ENCODE measurements at regions of chr4 and their contacts with region 1.

Region 1: GRCh38 chr4:156475322-156475721 is 496.3 kb downstream of the PDGFC start:
- DNase-seq: peak; percentile 76
- ATAC-seq: peak; percentile 32; the same call in 1 of the 2 replicates
- H3K4me3 ChIP-seq: no peak overlapping the region
- H3K27ac ChIP-seq: no peak overlapping the region
- H3K4me1 ChIP-seq: peaks cover 5% of the 10 kb centered on the region
- H3K27me3 ChIP-seq: no peaks in the 10 kb centered on the region
- CTCF ChIP-seq: peak; percentile 70
- POLR2A ChIP-seq: no peak
- RAD21 ChIP-seq: peak; percentile 90

Region 2: DNA sequence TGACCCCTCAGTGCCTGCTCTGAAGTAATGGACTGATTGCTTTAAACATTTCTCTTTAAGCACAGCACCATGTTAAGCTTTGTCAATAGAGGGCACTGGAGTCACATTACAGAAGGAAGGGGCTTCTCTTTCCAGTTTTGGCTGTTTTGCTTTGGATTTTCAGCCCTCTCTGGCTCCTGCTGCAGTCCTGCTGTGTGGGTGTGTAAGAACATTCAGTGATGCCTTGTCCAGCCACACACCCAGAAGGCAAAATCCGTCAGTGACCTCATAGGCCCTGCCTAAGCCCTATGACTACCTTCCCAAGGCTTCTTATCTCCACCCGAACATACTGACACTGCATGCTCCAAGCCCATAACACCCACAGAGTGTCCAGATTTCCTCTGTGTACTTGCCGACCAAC is 306.3 kb before region 1 on chr4:
- CTCF ChIA-PET with region 1: interaction called, 14 read pairs
- POLR2A ChIA-PET with region 1: no interaction called
- dilution Hi-C with region 1: no loop called
- in situ Hi-C with region 1: no loop called
- intact Hi-C with region 1: loop called (anchors 1 kb)
- DNase-seq: peak; percentile 95
- ATAC-seq: peak; percentile 97
- H3K4me3 ChIP-seq: no peak overlapping the region
- H3K27ac ChIP-seq: no peak overlapping the region
- H3K4me1 ChIP-seq: peaks cover 5% of the 10 kb centered on the region
- H3K27me3 ChIP-seq: no peaks in the 10 kb centered on the region
- CTCF ChIP-seq: peak; percentile 75
- POLR2A ChIP-seq: no peak
- RAD21 ChIP-seq: peak; percentile 84

Region 3: GRCh38 chr4:156638925-156639605 is 163.7 kb after region 1 on chr4:
- CTCF ChIA-PET with region 1: no interaction called
- POLR2A ChIA-PET with region 1: no interaction called
- dilution Hi-C with region 1: no loop called
- in situ Hi-C with region 1: no loop called
- intact Hi-C with region 1: loop called (anchors 2 kb)
- DNase-seq: peak; percentile 69
- ATAC-seq: peak; percentile 75
- H3K4me3 ChIP-seq: no peak overlapping the region
- H3K27ac ChIP-seq: no peak overlapping the region
- H3K4me1 ChIP-seq: peaks cover 5% of the 10 kb centered on the region; the same call in 1 of the 2 replicates
- H3K27me3 ChIP-seq: no peaks in the 10 kb centered on the region
- CTCF ChIP-seq: no peak
- POLR2A ChIP-seq: no peak
- RAD21 ChIP-seq: no peak

Region 4: DNA sequence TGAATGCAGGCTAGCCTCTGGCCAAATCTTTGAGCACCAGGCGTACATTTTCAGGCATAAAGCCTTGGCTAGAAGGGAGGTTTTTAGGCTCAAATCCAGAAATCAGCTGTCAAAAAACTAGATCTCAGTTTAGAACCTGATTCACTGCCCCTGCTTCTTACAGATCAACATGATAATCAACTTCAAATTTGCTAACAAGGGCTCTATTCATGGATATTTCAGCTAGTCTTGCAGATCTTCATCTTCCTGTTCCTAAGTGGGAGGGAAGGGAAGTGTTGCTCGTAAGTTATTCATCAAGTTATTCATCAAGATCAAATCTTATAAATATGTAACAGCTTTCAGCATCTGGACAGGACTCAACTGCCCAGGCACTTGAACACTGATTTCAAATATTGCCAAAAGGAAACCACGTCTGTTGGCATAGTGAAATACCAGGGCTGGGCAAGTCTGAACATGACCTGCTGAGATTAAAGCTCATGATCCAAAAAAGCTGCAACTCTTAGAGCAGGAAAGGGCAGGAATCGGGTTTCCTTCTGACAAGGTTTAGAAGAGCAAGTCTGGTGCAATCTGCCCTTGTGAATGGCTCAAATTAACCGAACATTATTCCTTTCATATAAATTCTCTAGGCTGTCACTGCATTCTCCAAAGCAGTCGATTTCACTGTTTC is 296.0 kb after region 1 on chr4:
- CTCF ChIA-PET with region 1: no interaction called
- POLR2A ChIA-PET with region 1: no interaction called
- dilution Hi-C with region 1: no loop called
- in situ Hi-C with region 1: no loop called
- intact Hi-C with region 1: loop called (anchors 5 kb)
- DNase-seq: peak; percentile 69
- ATAC-seq: peak; percentile 69
- H3K4me3 ChIP-seq: no peak overlapping the region
- H3K27ac ChIP-seq: peak overlapping the region; percentile 91
- H3K4me1 ChIP-seq: peaks cover 10% of the 10 kb centered on the region
- H3K27me3 ChIP-seq: no peaks in the 10 kb centered on the region
- CTCF ChIP-seq: no peak
- POLR2A ChIP-seq: no peak
- RAD21 ChIP-seq: no peak

Region 5: GRCh38 chr4:157128395-157128794 is 653.1 kb after region 1 on chr4:
- CTCF ChIA-PET with region 1: interaction called, 6 read pairs
- POLR2A ChIA-PET with region 1: interaction called, 3 read pairs
- dilution Hi-C with region 1: no loop called
- in situ Hi-C with region 1: no loop called
- intact Hi-C with region 1: loop called (anchors 1 kb)
- DNase-seq: peak; percentile 52
- ATAC-seq: peak; percentile 88
- H3K4me3 ChIP-seq: no peak overlapping the region
- H3K27ac ChIP-seq: no peak overlapping the region
- H3K4me1 ChIP-seq: no peaks in the 10 kb centered on the region
- H3K27me3 ChIP-seq: no peaks in the 10 kb centered on the region
- CTCF ChIP-seq: peak; percentile 67
- POLR2A ChIP-seq: no peak
- RAD21 ChIP-seq: peak; percentile 74

Region 6: DNA sequence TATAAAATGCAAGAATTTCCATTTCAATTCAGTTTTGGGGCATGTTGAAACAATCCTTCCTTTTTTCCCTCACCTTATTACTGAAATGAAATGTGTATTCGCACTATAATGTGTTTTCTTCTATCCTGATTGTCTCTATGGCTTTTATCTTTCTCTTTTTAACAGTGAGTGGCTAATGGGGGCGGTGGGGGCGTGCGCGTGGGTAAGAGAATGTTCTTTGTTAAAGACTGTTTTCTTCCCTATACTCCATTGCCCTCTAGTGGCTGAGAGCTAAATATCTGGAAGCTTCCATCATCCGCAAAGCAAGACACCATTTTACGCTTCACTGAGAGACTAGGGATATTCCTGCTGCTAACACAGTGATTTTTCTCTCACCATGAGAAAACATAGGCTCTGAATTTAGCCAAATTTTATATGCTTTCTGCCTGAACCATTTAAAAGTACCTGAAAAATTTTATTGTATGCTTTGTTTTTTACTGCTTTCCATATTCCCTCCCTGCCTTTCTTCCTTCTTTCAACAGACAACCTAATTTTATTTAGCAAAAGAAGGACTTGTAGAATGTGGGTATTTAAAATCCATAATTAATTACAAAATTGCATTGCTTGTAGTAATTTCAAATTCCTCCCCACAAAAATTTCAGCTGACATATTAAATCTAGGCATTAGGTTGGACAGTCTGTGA is 1503.5 kb after region 1 on chr4:
- CTCF ChIA-PET with region 1: no interaction called
- POLR2A ChIA-PET with region 1: no interaction called
- dilution Hi-C with region 1: no loop called
- in situ Hi-C with region 1: loop called (anchors 25 kb)
- intact Hi-C with region 1: loop called (anchors 1 kb)
- DNase-seq: peak; percentile 64
- ATAC-seq: peak; percentile 95
- H3K4me3 ChIP-seq: no peak overlapping the region; the same call in 1 of the 2 replicates
- H3K27ac ChIP-seq: no peak overlapping the region
- H3K4me1 ChIP-seq: no peaks in the 10 kb centered on the region
- H3K27me3 ChIP-seq: no peaks in the 10 kb centered on the region; the same call in 1 of the 2 replicates
- CTCF ChIP-seq: peak; percentile 78
- POLR2A ChIP-seq: no peak
- RAD21 ChIP-seq: peak; percentile 81